ENCODE measurements at regions of chr5 and their contacts with region 1.

Region 1: GRCh38 chr5:97162045-97162444 is 19.6 kb upstream of the LIX1 start:
- DNase-seq: peak; percentile 66
- H3K4me3 Mint-ChIP-seq: no peak overlapping the region
- H3K27ac Mint-ChIP-seq: no peak overlapping the region
- H3K4me1 Mint-ChIP-seq: peaks cover 6% of the 10 kb centered on the region
- H3K27me3 Mint-ChIP-seq: no peaks in the 10 kb centered on the region

Region 2: GRCh38 chr5:96752341-96753016 is 409.6 kb before region 1 on chr5:
- CTCF ChIA-PET with region 1: interaction called, 66 read pairs
- DNase-seq: peak; percentile 41
- H3K4me3 Mint-ChIP-seq: no peak overlapping the region
- H3K27ac Mint-ChIP-seq: no peak overlapping the region
- H3K4me1 Mint-ChIP-seq: no peaks in the 10 kb centered on the region
- H3K27me3 Mint-ChIP-seq: no peaks in the 10 kb centered on the region

Region 3: GRCh38 chr5:96997265-96997859 is 164.7 kb before region 1 on chr5:
- CTCF ChIA-PET with region 1: interaction called, 10 read pairs
- DNase-seq: peak; percentile 39
- H3K4me3 Mint-ChIP-seq: no peak overlapping the region
- H3K27ac Mint-ChIP-seq: no peak overlapping the region
- H3K4me1 Mint-ChIP-seq: peaks cover 29% of the 10 kb centered on the region
- H3K27me3 Mint-ChIP-seq: no peaks in the 10 kb centered on the region

Region 4: DNA sequence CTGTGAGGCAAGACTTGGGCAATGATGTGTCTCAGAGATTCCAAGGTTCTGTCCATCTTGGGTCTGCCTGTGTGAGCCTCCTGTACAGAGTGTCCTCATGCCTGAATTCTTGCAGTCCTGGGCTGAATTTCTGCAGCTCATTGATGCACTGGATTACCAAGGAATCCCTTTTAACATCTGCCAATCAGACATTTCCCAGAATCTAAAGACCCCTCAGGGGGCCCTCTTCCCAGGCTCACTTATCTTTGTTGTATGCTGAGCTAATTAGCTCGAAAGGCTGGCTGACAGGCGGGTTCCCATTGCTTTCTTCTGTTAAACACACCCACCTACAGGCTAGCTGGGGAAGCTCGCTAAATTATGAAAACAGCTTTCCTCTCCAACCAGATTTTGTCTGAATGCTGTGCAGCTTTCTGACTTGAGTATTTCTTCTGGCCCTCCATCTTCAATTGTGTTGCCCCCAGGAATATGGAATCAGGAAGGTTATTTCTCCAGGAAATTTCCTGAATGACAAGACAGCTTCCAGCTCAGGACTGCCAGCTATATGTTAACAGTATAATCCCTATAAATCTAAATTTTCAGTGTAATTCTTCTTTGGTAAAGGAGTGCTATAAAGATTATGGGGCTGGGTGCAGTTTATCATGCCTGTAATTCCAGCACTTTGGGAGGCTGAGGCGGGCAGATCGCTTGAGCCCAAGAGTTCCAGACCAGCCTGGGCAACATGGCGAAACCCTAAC is 19.4 kb before region 1 on chr5 and contains the start of gene LIX1:
- CTCF ChIA-PET with region 1: interaction called, 46 read pairs
- DNase-seq: peak; percentile 58
- H3K4me3 Mint-ChIP-seq: no peak within 1 kb of the TSS
- H3K27ac Mint-ChIP-seq: no peak within 1 kb of the TSS
- H3K4me1 Mint-ChIP-seq: no peaks in the 10 kb centered on the region
- H3K27me3 Mint-ChIP-seq: peaks cover 28% of the 10 kb centered on the region

Region 5: GRCh38 chr5:97149709-97150108 is 12.3 kb before region 1 on chr5:
- CTCF ChIA-PET with region 1: interaction called, 46 read pairs
- DNase-seq: no peak
- H3K4me3 Mint-ChIP-seq: no peak overlapping the region
- H3K27ac Mint-ChIP-seq: no peak overlapping the region
- H3K4me1 Mint-ChIP-seq: no peaks in the 10 kb centered on the region
- H3K27me3 Mint-ChIP-seq: peaks cover 8% of the 10 kb centered on the region

Region 6: DNA sequence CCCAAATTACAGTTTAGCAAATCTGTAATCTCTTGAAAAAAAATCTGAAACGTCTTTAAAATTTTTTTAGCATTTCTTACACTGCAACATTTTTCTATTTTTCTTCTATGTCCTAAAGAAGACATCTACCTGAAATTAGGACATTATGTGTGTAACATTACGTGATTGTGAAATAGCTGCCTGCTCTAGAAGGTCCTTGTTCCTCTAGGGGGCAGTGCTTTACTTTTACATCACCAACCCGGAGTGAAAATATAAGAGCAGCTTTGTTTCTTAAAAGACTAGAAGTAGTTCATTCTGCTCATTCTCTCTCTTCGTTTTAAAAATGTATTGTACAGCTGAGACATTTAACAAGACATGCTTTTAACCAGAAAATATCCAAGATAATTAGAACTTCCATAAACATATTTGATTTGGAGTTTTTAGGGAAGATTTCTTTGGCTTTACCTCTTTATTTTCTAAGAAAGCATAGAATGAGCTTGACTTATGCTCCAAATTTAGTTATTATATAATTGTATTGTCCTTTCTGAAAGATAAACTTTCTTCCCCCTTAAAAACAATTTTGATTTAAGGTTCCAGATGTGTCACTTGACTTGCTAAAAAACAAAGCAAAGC is 69.1 kb after region 1 on chr5:
- CTCF ChIA-PET with region 1: no interaction called
- DNase-seq: peak; percentile 44
- H3K4me3 Mint-ChIP-seq: no peak overlapping the region
- H3K27ac Mint-ChIP-seq: no peak overlapping the region
- H3K4me1 Mint-ChIP-seq: no peaks in the 10 kb centered on the region
- H3K27me3 Mint-ChIP-seq: peaks cover 7% of the 10 kb centered on the region

Measured in activated naive CD4-positive, alpha-beta T cell treated with anti-CD3 and anti-CD28 coated beads, Interleukin-2, amount 10 ng/mL, durations not matched to agents 7 days and 5 days (primary cell).